Head of caudate nucleus (tissue), 42 donors: ENCODE measurements at regions of chr2 and their contacts with region 1.

Region 1: GRCh38 chr2:85635636-85636035 is 19.6 kb downstream of the USP39 start:
- DNase-seq: no peak

Region 2: DNA sequence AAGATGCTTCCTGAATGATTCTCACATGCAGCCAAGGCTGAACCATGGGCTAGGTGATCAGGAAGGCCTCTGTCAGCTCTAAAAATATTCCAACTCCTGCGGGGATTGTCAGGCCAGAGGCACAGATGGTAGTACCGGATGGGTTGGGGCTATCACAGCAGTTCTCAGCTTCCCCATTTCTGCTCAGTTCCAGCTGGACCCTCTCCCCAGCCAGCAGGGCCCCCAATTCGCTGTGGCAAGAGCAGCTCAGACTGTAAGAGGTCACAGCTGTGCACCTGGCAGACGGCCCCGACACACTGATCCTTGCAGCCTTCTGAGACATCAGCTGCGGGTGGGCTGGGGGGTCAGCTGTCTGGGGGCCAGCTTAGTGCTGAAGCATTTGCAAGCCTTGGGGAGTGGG is 546.1 kb before region 1 on chr2:
- intact Hi-C with region 1: no loop called
- DNase-seq: peak in 1 of 42 donors; percentile 8

Region 3: DNA sequence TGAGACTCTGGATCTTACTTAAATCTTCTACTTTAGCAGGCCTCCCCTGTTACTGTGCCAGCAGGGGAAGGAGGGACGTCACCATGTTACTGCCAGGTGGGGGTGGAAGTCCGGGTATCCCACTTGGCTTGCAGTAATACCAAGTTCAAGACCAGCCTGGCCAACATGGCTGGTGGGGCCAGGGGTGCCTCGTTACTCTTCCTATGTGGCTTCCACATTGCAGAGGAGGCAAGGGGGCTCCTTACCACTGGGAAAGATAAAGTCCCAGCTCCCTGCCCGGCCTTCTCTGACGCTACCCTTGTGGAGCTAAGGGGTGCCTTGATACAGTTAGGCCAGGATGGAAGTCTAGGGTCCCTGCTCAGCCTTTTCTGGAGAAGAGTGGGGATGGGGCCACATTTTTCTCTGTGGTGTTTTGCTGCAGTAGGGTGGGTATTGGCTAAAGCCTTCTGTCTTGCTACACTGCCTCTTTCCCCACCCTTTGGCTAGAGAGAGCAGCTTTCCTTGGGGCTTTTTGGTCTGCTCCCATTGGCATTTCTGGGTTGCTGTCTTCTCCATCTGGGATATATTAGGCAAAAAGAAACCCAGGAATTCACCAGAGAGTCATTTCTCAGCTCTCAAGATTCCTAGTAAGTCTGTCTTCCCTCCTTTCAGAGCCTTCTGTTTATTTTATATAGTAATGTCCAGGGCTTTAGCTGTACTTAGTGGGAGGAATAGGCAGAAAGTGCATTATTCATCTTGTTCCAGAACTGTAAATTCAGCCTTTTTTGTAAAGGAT is 259.2 kb before region 1 on chr2:
- intact Hi-C with region 1: no loop called
- DNase-seq: peak in 1 of 42 donors; percentile 34

Region 4: DNA sequence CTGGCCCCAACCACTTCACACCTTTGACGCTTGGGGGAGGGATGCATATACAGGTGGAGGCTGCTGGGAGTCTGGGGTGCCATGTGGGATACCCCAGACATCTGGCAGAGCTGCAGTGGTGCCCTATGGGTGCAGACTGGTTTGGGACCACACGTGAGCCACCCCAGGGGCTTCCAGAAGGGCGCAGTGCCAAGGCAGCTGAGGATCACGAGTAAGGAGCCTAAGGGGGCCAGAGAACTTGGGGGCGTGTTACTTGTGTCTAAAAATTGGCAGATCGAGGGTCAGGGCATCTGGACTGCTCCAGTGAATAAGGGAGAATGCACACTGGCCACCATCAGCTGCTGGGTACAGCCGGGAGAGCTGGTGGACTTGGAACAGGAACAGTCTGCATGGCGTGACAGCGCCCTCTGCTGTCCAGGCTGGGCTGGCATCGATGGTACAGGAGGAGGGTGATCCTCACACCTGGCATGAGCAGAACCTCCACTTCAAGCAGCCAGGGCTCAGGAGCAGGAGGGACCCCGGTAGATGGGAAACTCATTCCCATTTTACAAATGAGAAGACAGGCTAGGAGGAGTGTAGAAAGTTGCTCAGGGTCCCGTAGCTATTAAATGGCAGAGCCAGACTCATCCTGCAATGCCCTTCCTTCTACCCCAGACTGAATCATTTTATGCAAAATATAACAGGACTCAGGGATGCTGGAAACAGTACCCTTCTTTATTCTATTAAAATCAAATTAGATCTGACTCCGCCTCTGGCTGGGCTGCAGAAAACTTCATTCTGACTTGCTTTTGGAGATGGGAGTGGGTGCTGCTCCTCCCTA is 178.6 kb after region 1 on chr2:
- intact Hi-C with region 1: loop called (anchors 10 kb)
- DNase-seq: peak; percentile 84 to 98 (median 95)